ENCODE measurements at regions of chr6 and their contacts with region 1.

Region 1: DNA sequence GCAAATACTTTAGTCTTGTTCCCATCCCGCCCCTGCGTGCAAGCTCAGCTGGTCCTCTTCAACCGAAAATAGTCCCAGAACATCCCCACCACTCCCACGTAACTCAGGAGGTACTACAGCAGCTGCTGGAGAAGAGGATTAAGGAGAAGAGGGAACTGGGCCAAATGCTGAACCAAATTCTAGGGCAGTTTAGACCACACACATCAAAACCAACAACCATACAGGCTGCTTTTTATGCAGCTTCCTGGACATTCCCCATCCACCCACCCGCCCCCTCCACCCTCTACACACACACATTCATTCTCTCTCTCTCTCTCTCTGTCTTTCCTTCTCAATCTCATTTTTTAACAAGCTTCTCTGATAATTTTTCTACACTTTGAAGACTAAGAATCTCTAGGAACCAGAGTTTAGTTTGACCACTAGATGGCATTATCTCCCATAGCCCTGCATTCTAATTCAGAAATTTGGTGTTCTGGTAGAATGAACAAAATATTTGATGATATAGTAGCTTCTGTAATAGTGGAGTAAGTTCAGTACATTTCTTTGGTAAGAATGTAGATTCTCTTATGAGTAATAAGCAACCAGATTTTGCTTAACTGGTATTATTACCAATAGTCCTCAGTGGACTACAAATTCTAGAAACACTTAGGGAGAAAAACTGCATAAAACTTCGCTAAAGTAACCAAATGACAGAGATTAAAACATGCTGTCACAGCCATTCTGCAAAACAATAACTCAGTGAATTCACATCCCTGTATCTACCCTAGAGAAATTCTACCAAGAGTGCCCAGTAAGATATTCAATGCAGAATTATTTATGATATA is 52.1 kb upstream of the BEND6 start:
- DNase-seq: no peak
- H3K4me3 ChIP-seq: no peak overlapping the region
- H3K27ac ChIP-seq: no peak overlapping the region
- H3K4me1 ChIP-seq: peaks cover 0 to 7% of the 10 kb centered on the region in 2 donors
- H3K27me3 ChIP-seq: no peaks in the 10 kb centered on the region
- CTCF ChIP-seq: peak; percentile 37 to 76 (median 66)
- POLR2A ChIP-seq: no peak

Region 2: DNA sequence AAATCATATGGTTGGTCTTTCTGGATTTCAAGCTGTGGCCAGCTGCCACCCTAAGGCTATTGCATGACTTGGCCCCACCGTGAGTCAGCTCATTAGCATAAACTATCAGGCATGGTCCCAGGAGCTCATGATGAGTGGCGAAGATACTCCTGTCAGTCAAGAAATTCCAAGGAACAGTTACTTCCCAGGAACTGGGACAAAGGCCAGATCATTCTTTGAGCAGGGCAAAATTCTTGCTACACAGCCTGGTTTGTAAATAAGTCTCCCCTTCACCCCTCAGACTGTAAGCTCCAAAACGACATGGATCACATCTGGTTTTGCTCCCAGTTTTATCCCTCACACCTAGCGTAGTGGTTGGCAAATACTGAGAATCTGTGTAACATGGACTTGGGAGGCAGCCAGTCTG is 110.7 kb after region 1 on chr6:
- intact Hi-C with region 1: loop called in 1 of 2 experiments (anchors 10 kb)
- DNase-seq: no peak
- H3K4me3 ChIP-seq: no peak overlapping the region
- H3K27ac ChIP-seq: no peak overlapping the region
- H3K4me1 ChIP-seq: no peaks in the 10 kb centered on the region
- H3K27me3 ChIP-seq: no peaks in the 10 kb centered on the region
- CTCF ChIP-seq: no peak
- POLR2A ChIP-seq: no peak

Region 3: DNA sequence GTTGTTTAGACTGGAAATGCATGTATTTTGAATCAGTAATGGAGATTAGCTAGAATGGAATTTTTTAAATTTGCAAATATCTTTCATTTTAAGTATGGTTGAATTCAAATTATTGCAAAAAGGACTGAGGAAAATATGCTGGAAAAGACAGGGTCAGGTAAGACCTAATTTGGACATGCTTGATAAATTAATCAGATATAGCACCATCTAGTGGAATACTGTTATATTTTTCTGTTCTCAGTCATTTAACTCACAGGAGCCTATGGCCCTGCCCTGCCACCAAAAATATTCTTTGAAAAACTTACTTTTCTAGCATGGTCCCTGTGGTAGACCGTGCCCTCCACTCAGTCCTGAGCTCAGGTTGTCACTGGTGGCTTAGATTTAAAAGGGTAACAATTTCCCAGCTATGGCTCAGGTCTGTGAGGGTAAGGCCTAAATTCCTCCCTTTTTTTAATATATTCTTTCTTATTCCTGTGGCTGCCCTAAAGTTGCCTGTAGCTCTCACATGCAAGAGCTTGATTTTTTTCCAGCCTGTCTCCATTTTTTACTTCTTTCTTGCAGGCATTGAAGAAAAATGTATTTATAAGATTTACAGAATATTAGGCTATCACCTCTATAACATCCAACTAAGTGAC is 118.3 kb after region 1 on chr6:
- intact Hi-C with region 1: loop called (anchors 5 to 10 kb)
- DNase-seq: no peak
- H3K4me3 ChIP-seq: no peak overlapping the region
- H3K27ac ChIP-seq: no peak overlapping the region
- H3K4me1 ChIP-seq: no peaks in the 10 kb centered on the region
- H3K27me3 ChIP-seq: no peaks in the 10 kb centered on the region
- CTCF ChIP-seq: peak; percentile 46 to 71 (median 60)
- POLR2A ChIP-seq: no peak

Region 4: GRCh38 chr6:57316581-57317059 is 413.8 kb after region 1 on chr6:
- intact Hi-C with region 1: loop called (anchors 5 kb)
- DNase-seq: peak; percentile 80 to 93 (median 86)
- H3K4me3 ChIP-seq: peak overlapping the region; percentile 24 to 64 (median 55)
- H3K27ac ChIP-seq: peak overlapping the region in 3 of 5 donors; percentile 4 to 84 (median 27)
- H3K4me1 ChIP-seq: peaks cover 5 to 9% of the 10 kb centered on the region in 2 donors
- H3K27me3 ChIP-seq: no peaks in the 10 kb centered on the region
- CTCF ChIP-seq: peak; percentile 56 to 87 (median 87)
- POLR2A ChIP-seq: peak in 1 of 2 donors; percentile 35

Region 5: DNA sequence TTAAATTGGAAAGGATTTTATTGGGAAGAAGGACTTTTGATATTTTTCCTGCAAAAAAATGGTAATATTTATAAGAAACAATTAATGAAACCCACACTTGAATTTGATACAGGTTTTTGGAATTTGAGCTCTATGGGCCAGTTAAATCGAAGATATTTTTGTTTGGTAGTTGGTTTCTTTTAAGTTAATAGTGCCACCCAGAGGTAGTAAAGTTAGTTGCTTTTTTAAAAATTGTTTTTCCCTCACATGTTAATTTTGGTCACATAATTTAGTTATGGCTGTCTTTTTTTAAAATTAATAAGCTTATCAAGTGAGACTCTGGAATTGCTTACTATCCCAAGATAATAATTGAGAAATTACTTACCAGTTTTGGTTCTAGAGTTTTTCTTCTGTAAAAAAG is 421.7 kb after region 1 on chr6:
- intact Hi-C with region 1: loop called (anchors 5 kb)
- DNase-seq: no peak
- H3K4me3 ChIP-seq: no peak overlapping the region
- H3K27ac ChIP-seq: no peak overlapping the region
- H3K4me1 ChIP-seq: no peaks in the 10 kb centered on the region
- H3K27me3 ChIP-seq: no peaks in the 10 kb centered on the region
- CTCF ChIP-seq: peak in 5 of 6 experiments; percentile 20 to 55 (median 54)
- POLR2A ChIP-seq: no peak

Measured in adrenal gland (tissue), 19 donors.